HCT116 (cell line): ENCODE measurements at regions of chr19 and their contacts with region 1.

Region 1: DNA sequence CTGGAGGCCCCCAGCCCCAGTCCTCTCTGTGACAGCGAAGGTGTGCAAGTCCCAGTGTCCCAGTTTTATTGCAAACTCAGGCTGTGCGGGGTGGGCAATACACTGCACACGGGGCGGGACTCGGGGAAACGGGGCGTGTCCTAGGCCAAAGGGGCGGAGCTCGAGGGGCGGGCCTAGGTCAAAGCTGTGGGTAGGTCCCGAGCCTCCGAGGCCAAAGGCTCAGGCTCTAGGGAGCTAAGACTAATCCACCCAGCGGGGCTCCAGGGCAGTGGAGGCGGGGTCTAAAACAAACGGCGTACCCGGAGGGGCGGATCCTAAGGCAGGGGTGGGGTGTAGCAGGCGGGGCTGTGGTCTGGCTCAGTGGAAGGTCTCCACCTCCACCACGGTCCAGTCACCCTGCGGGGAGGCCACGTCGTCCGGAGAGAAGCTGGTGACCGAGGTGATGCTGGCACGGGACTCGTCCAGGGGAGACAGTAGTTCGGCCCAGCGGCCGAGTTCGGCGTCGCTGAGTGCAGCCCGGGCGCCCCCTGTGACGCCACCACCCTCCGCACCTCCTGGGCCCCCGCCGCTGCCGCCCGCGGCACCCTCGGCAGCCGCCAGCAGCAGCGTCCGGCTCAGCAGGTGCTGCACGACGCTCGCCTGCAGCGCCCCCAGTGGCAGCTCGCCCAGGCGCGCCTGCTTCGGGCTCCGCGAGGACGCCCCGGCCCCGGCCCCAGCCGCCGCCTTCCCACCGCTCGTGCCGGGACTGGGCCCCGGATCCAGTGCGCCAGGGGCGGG is 5.3 kb downstream of the PRR36 start:
- DNase-seq: peak; percentile 92
- ATAC-seq: peak; percentile 59
- H3K4me3 ChIP-seq: peak overlapping the region; percentile 46 to 58
- H3K27ac ChIP-seq: peak overlapping the region; percentile 86
- H3K4me1 ChIP-seq: peaks cover 26 to 67% of the 10 kb centered on the region in 2 experiments
- H3K27me3 ChIP-seq: no peaks in the 10 kb centered on the region
- CTCF ChIP-seq: peak in 2 of 3 experiments; percentile 63 to 65; a peak in 4 of 6 replicates
- POLR2A ChIP-seq: no peak
- RAD21 ChIP-seq: no peak

Region 2: DNA sequence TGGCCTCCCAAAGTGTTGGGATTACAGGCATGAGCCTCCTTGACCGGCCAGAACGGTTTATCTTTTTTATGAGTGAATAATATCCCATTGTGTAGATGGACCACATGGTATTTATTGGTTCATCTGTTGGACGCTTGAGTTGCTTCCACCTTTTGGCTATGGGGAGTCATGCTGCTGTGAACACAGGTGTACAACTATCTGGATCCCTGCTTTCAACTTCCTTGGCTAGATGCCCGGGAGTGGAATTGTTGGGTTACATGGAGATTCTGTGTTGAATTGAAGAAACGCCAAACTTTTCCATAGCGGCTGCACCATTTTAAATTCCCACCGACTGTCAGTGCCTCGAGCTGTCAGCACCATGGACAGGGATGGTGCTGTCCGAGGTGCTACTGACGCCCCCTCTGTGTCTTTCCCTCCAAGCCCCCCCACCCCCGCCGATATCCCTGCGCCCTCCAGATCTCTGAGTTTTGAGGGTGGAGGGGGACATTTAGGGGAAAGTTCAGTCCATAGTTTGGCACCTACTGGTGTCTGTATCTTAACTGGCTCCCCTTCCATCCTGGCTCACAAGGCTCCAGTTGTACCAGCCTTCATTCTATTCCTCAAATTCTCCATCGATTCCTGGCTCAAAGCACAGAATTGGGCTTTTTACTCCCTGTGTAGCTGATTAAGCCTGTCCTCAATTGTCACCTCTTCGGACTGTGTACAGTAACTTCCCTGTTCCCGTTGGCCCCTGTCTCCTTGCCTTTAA is 306.0 kb before region 1 on chr19:
- CTCF ChIA-PET with region 1: interaction called, 11 read pairs
- POLR2A ChIA-PET with region 1: no interaction called
- RAD21 ChIA-PET with region 1: interaction called in 1 of 2 experiments, 3 read pairs
- intact Hi-C with region 1: no loop called
- DNase-seq: no peak
- ATAC-seq: no peak
- H3K4me3 ChIP-seq: no peak overlapping the region
- H3K27ac ChIP-seq: no peak overlapping the region
- H3K4me1 ChIP-seq: no peaks in the 10 kb centered on the region
- H3K27me3 ChIP-seq: no peaks in the 10 kb centered on the region
- CTCF ChIP-seq: no peak
- POLR2A ChIP-seq: no peak
- RAD21 ChIP-seq: no peak

Region 3: GRCh38 chr19:7852851-7853769 is 15.8 kb before region 1 on chr19:
- CTCF ChIA-PET with region 1: interaction called, 29 read pairs
- POLR2A ChIA-PET with region 1: interaction called, 3 read pairs
- RAD21 ChIA-PET with region 1: interaction called, 3 to 5 read pairs
- intact Hi-C with region 1: no loop called
- DNase-seq: peak; percentile 85
- ATAC-seq: peak; percentile 97
- H3K4me3 ChIP-seq: peak overlapping the region in 1 of 2 experiments; percentile 9; a peak in 1 of 4 replicates
- H3K27ac ChIP-seq: no peak overlapping the region
- H3K4me1 ChIP-seq: peaks cover 11 to 18% of the 10 kb centered on the region in 2 experiments; a peak in 3 of 4 replicates
- H3K27me3 ChIP-seq: no peaks in the 10 kb centered on the region
- CTCF ChIP-seq: peak; percentile 83 to 91 (median 84)
- POLR2A ChIP-seq: no peak
- RAD21 ChIP-seq: peak; percentile 96

Region 4: GRCh38 chr19:7903244-7904073 is 34.6 kb after region 1 on chr19 and contains the start of gene MAP2K7:
- CTCF ChIA-PET with region 1: interaction called, 14 read pairs
- POLR2A ChIA-PET with region 1: interaction called, 8 read pairs
- RAD21 ChIA-PET with region 1: interaction called in 1 of 2 experiments, 4 read pairs
- intact Hi-C with region 1: no loop called
- DNase-seq: peak; percentile 98
- ATAC-seq: peak; percentile 85
- H3K4me3 ChIP-seq: peak within 1 kb of the TSS; percentile 75 to 97
- H3K27ac ChIP-seq: peak within 1 kb of the TSS; percentile 92
- H3K4me1 ChIP-seq: peaks cover 3 to 30% of the 10 kb centered on the region in 2 experiments; a peak in 2 of 4 replicates
- H3K27me3 ChIP-seq: no peaks in the 10 kb centered on the region
- CTCF ChIP-seq: peak; percentile 25 to 95 (median 55); a peak in 5 of 6 replicates
- POLR2A ChIP-seq: peak; percentile 97
- RAD21 ChIP-seq: no peak; the same call in none of the 2 replicates
- total RNA-seq, gene MAP2K7: 59.1 TPM

Region 5: DNA sequence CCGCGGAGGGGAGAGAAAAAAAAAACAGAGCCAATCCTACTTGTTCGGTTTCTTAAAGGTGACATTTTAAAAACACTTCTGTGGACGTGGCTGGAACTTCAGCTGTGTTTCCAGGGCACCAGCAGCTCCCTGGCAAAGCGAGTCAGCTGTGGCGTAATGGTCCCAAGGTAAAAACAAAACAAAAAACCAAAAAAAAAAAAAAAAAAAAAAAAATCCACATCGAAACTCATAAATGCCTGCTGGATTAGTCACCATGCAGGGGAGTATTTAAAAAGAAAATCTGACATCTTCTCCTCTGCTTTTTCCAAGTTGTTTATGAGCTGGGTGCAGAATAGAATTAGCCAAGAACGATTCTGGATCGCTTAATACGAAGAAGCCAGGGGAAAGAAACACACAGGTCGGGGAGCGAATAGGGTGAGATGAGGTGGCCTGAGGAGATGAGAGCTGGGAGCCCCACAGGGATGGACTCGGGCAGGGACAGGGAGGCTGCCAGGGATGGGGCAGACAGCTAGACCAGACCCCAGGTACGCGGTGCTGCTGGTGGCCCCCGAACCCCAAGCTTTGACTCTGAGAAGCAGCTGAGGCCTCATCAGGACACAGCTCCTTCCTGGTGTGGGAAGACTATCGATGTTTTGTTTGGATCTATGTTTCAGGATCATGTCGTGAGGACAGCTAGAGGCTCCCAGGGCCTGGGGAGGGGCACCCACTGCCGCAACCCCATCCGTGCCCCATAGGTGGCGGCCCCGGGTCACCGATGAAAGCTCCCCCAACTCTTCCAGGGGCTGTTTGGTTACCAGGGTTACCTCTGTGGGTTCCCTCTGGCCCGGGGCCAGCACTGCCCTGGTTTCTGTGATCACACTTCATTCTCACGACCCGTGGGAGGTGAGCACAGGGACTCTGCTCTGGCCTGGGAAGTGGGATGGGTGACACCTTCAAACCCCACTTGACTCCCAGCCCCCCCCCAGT is 60.2 kb after region 1 on chr19:
- CTCF ChIA-PET with region 1: interaction called, 17 read pairs
- POLR2A ChIA-PET with region 1: interaction called, 3 read pairs
- RAD21 ChIA-PET with region 1: no interaction called
- intact Hi-C with region 1: no loop called
- DNase-seq: no peak
- ATAC-seq: peak; percentile 27
- H3K4me3 ChIP-seq: no peak overlapping the region
- H3K27ac ChIP-seq: peak overlapping the region; percentile 57
- H3K4me1 ChIP-seq: peaks cover 22 to 52% of the 10 kb centered on the region in 2 experiments
- H3K27me3 ChIP-seq: no peaks in the 10 kb centered on the region
- CTCF ChIP-seq: peak in 2 of 3 experiments; percentile 57 to 70; a peak in 4 of 6 replicates
- POLR2A ChIP-seq: no peak
- RAD21 ChIP-seq: no peak

Region 6: DNA sequence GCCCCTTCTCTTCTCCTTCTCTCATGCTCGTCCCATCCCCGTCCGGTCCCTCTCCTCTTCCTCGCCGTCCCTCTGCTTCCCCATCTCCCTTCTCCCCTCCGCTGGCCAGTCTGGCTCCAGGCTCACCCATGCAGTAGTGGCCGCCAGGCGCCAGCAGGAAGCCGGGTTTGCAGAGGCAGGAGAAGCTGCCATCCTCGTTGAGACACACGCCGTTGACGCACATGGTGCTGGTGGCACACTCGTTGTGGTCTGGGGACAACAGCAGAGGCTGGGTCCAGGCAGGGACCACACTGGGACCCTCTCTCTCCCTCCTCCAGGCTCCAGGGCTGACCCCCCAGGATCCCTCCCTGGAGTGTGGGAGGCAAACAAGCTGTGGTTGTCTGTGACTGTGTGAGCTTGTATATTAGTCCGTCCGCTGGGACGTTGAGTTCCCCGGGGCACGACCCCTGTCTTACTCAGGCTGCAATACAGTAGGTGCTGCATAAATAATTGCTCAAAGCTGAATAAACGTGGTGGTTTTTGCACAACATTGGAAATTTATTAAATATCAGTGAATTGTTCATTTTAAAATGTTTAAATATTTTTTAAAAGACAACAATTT is 264.1 kb after region 1 on chr19:
- CTCF ChIA-PET with region 1: no interaction called
- POLR2A ChIA-PET with region 1: no interaction called
- RAD21 ChIA-PET with region 1: no interaction called
- intact Hi-C with region 1: no loop called
- DNase-seq: no peak
- ATAC-seq: no peak
- H3K4me3 ChIP-seq: no peak overlapping the region
- H3K27ac ChIP-seq: no peak overlapping the region
- H3K4me1 ChIP-seq: no peaks in the 10 kb centered on the region
- H3K27me3 ChIP-seq: no peaks in the 10 kb centered on the region
- CTCF ChIP-seq: no peak
- POLR2A ChIP-seq: no peak
- RAD21 ChIP-seq: no peak